HepG2 (cell line): ENCODE measurements at regions of chr20 and their contacts with region 1.

Region 1: GRCh38 chr20:32762149-32762753 is at the start of gene DNMT3B:
- DNase-seq: peak; percentile 60
- ATAC-seq: peak; percentile 79
- H3K4me3 ChIP-seq: peak within 1 kb of the TSS; percentile 75 to 95 (median 95)
- H3K27ac ChIP-seq: peak within 1 kb of the TSS; percentile 24
- H3K4me1 ChIP-seq: peaks cover 62% of the 10 kb centered on the region
- H3K27me3 ChIP-seq: no peaks in the 10 kb centered on the region; a peak in 1 of 5 replicates
- CTCF ChIP-seq: peak; percentile 49; the same call in 1 of the 2 replicates
- EP300 ChIP-seq: no peak
- POLR2A ChIP-seq: peak; percentile 25 to 76; a peak in 2 of 4 replicates
- RAD21 ChIP-seq: peak; percentile 95
- total RNA-seq, gene DNMT3B: 13.2 and 13.9 TPM in 2 replicates

Region 2: DNA sequence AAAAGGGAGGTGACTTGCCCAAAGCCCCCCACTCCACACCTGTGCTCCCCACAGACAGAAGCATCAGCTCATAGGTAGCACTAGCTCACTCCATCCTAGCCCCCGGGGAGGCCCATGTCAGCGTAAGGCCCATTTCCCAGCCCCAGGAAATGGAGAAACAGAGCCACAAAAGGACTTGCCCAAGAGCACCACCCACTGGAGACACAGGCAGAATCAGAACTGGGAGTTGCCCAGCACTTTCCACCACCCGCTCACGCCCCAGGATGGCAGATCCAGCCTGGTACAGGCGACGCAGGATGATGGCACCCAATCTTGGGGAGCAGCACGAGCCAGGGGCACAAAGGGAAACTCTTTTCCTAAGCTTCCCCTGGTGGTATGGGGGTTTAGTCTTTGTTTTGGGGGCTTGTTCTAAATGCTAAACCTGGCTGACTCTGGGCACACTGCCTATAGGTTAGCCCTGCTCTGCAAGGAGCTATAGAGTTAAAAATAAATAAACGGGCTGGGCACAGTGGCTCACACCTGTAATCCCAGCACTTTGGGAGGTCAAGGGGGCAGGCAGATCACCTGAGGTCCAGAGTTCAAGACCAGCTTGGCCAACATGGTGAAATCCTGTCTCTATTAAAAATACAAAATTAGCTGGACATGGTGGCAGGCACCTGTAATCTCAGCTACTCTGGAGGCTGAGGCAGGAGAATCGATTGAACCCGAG is 100.3 kb before region 1 on chr20:
- CTCF ChIA-PET with region 1: no interaction called
- POLR2A ChIA-PET with region 1: no interaction called
- in situ Hi-C with region 1: no loop called
- intact Hi-C with region 1: no loop called
- DNase-seq: no peak
- ATAC-seq: no peak
- H3K4me3 ChIP-seq: no peak overlapping the region
- H3K27ac ChIP-seq: no peak overlapping the region
- H3K4me1 ChIP-seq: peaks cover 43% of the 10 kb centered on the region
- H3K27me3 ChIP-seq: no peaks in the 10 kb centered on the region
- CTCF ChIP-seq: peak; percentile 69
- EP300 ChIP-seq: no peak
- POLR2A ChIP-seq: no peak
- RAD21 ChIP-seq: no peak

Region 3: GRCh38 chr20:32674362-32674789 is 87.9 kb before region 1 on chr20:
- CTCF ChIA-PET with region 1: interaction called, 5 read pairs
- POLR2A ChIA-PET with region 1: interaction called, 5 read pairs
- in situ Hi-C with region 1: no loop called
- intact Hi-C with region 1: loop called (anchors 5 kb)
- DNase-seq: peak; percentile 64
- ATAC-seq: peak; percentile 51
- H3K4me3 ChIP-seq: peak overlapping the region in 1 of 3 experiments; percentile 71; a peak in 1 of 6 replicates
- H3K27ac ChIP-seq: no peak overlapping the region
- H3K4me1 ChIP-seq: peaks cover 65% of the 10 kb centered on the region
- H3K27me3 ChIP-seq: no peaks in the 10 kb centered on the region
- CTCF ChIP-seq: peak; percentile 92
- EP300 ChIP-seq: no peak
- POLR2A ChIP-seq: no peak
- RAD21 ChIP-seq: peak; percentile 98

Region 4: GRCh38 chr20:32779500-32780211 is 17.4 kb after region 1 on chr20:
- CTCF ChIA-PET with region 1: interaction called, 4 read pairs
- POLR2A ChIA-PET with region 1: interaction called, 11 read pairs
- in situ Hi-C with region 1: no loop called
- intact Hi-C with region 1: no loop called
- DNase-seq: no peak
- ATAC-seq: peak; percentile 7; the same call in 1 of the 3 replicates
- H3K4me3 ChIP-seq: no peak overlapping the region
- H3K27ac ChIP-seq: no peak overlapping the region
- H3K4me1 ChIP-seq: peaks cover 35% of the 10 kb centered on the region
- H3K27me3 ChIP-seq: no peaks in the 10 kb centered on the region
- CTCF ChIP-seq: no peak; the same call in 1 of the 2 replicates
- EP300 ChIP-seq: no peak
- POLR2A ChIP-seq: no peak
- RAD21 ChIP-seq: no peak

Region 5: GRCh38 chr20:32796981-32797451 is 34.8 kb after region 1 on chr20:
- CTCF ChIA-PET with region 1: no interaction called
- POLR2A ChIA-PET with region 1: no interaction called
- in situ Hi-C with region 1: no loop called
- intact Hi-C with region 1: no loop called
- DNase-seq: no peak
- ATAC-seq: no peak
- H3K4me3 ChIP-seq: no peak overlapping the region
- H3K27ac ChIP-seq: no peak overlapping the region
- H3K4me1 ChIP-seq: peaks cover 7% of the 10 kb centered on the region; the same call in 1 of the 2 replicates
- H3K27me3 ChIP-seq: no peaks in the 10 kb centered on the region
- CTCF ChIP-seq: no peak
- EP300 ChIP-seq: no peak
- POLR2A ChIP-seq: no peak
- RAD21 ChIP-seq: no peak